Activated CD8-positive, alpha-beta T cell treated with anti-CD3 and anti-CD28 coated beads, Interleukin-2, amount 10 ng/mL, durations not matched to agents 7 days and 5 days (primary cell): ENCODE measurements at regions of chr2 and their contacts with region 1.

Region 1: GRCh38 chr2:98649135-98649991 is 41.0 kb downstream of the UNC50 start:
- DNase-seq: peak; percentile 90
- ATAC-seq: peak; percentile 91
- H3K4me3 Mint-ChIP-seq: no peak overlapping the region
- H3K27ac Mint-ChIP-seq: peak overlapping the region; percentile 27
- H3K4me1 Mint-ChIP-seq: peaks cover 55% of the 10 kb centered on the region
- H3K27me3 Mint-ChIP-seq: no peaks in the 10 kb centered on the region

Region 2: DNA sequence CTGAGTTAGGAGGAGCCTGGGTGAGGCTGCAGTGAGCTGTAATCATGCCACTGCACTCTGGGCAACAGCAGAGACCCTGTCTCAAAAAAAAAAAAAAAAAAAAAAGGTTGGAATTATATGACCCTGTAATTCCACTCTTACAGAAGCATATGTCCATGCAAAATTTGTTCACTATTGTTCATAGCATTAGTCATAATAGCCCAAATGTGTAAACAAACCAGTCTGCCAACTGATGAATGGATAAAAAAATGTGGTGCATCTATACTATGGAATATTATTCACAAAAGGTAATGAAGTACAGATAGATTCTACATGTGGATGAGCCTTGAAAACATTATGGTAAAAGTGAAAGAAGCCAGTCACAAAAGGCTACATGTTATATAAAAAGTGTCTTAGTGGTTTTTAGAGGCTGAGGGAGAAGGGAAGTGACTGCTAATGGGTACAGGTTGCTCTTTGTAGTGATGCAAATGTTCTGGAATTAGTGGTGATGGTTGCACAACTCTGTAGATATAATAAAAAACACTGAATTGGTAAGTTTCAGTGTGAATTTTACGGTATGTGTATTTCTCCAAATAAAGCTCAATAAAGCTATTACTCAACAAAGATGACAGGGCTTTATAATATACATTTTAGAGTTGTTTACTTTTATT is 50.5 kb before region 1 on chr2:
- CTCF ChIA-PET with region 1: no interaction called
- POLR2A ChIA-PET with region 1: no interaction called
- DNase-seq: no peak
- ATAC-seq: no peak
- H3K4me3 Mint-ChIP-seq: no peak overlapping the region
- H3K27ac Mint-ChIP-seq: peak overlapping the region; percentile 44
- H3K4me1 Mint-ChIP-seq: peaks cover 19% of the 10 kb centered on the region
- H3K27me3 Mint-ChIP-seq: no peaks in the 10 kb centered on the region

Region 3: GRCh38 chr2:98634401-98635092 is 14.8 kb before region 1 on chr2:
- CTCF ChIA-PET with region 1: interaction called, 19 read pairs
- POLR2A ChIA-PET with region 1: no interaction called
- DNase-seq: peak; percentile 79
- ATAC-seq: peak; percentile 73
- H3K4me3 Mint-ChIP-seq: peak overlapping the region; percentile 50
- H3K27ac Mint-ChIP-seq: peak overlapping the region; percentile 94
- H3K4me1 Mint-ChIP-seq: peaks cover 44% of the 10 kb centered on the region
- H3K27me3 Mint-ChIP-seq: no peaks in the 10 kb centered on the region

Region 4: DNA sequence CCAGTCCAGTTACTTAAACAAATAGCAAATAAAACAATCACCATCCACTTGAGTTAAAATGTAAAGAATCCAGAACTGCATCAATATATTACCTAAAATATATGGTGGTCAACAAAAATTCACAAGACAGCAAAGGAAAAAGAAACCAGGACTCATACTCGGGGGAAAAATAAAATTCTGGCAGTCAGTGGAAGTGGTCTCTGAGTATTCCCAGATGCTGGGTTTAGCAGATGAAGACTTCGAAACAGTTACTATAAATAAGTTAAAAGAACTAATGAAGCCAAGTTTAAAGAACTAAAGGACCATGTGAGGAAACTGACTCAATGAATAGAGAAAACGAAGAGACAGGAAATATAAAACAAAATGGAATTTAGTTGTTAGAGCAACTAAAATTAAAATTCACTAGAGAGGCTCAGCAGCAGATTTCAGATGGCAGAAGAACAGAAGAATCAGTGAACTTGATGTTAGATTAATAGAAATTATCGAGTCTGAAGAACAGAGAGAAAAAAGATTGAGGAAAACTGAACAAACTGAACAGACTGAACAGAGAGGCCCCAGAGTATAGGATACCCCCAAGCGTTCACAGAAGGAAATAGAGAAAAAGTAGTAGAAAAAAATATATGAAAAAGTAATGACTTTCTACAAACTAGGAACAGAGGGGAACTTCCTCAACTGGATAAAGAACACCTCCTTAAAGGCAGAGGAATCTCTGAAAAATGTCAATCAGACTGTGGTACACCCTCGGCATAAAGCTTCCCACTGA is 53.7 kb after region 1 on chr2:
- CTCF ChIA-PET with region 1: interaction called, 12 read pairs
- POLR2A ChIA-PET with region 1: no interaction called
- DNase-seq: no peak
- ATAC-seq: no peak
- H3K4me3 Mint-ChIP-seq: peak overlapping the region; percentile 20
- H3K27ac Mint-ChIP-seq: peak overlapping the region; percentile 76
- H3K4me1 Mint-ChIP-seq: peaks cover 54% of the 10 kb centered on the region
- H3K27me3 Mint-ChIP-seq: no peaks in the 10 kb centered on the region

Region 5: GRCh38 chr2:98805412-98806171 is 156.2 kb after region 1 on chr2:
- CTCF ChIA-PET with region 1: interaction called, 11 read pairs
- POLR2A ChIA-PET with region 1: no interaction called
- DNase-seq: no peak
- ATAC-seq: no peak
- H3K4me3 Mint-ChIP-seq: no peak overlapping the region
- H3K27ac Mint-ChIP-seq: no peak overlapping the region
- H3K4me1 Mint-ChIP-seq: peaks cover 24% of the 10 kb centered on the region
- H3K27me3 Mint-ChIP-seq: peaks cover 10% of the 10 kb centered on the region

Region 6: DNA sequence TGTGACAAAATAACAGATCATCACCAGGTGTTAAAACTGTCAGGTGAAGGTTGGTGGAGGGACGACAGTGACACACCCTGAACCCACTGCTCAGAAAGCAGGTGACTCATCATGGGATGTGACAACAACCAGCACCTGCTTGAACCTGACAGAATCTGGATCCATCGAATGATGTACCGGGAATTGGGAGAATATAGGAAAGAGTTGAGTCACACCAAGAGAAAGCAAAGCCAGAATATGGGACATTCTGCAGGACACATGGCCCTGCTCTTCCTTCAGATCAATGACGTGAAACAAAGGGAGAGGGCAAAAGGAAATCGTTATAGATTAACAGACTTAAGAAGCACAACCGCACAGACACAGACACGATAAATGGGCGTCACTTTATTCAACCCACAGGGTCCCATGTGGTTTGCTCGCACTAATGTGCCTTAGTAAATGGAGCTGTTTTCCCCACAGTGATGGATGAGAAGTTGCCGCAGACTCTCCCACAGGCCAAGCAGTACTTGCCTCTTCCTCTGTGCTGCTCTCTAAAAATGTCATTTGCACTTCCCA is 186.5 kb after region 1 on chr2:
- CTCF ChIA-PET with region 1: interaction called, 62 read pairs
- POLR2A ChIA-PET with region 1: interaction called, 3 read pairs
- DNase-seq: peak; percentile 71
- ATAC-seq: peak; percentile 79
- H3K4me3 Mint-ChIP-seq: peak overlapping the region; percentile 37
- H3K27ac Mint-ChIP-seq: peak overlapping the region; percentile 71
- H3K4me1 Mint-ChIP-seq: peaks cover 50% of the 10 kb centered on the region
- H3K27me3 Mint-ChIP-seq: peaks cover 5% of the 10 kb centered on the region